IMR-90 (cell line): ENCODE measurements at regions of chr3 and their contacts with region 1.

Region 1: GRCh38 chr3:65559643-65560042 is 479.1 kb downstream of the MAGI1 start:
- DNase-seq: no peak
- ATAC-seq: no peak
- H3K4me3 ChIP-seq: no peak overlapping the region
- H3K27ac ChIP-seq: no peak overlapping the region
- H3K4me1 ChIP-seq: no peaks in the 10 kb centered on the region
- H3K27me3 ChIP-seq: no peaks in the 10 kb centered on the region
- CTCF ChIP-seq: no peak
- POLR2A ChIP-seq: no peak
- RAD21 ChIP-seq: no peak

Region 2: DNA sequence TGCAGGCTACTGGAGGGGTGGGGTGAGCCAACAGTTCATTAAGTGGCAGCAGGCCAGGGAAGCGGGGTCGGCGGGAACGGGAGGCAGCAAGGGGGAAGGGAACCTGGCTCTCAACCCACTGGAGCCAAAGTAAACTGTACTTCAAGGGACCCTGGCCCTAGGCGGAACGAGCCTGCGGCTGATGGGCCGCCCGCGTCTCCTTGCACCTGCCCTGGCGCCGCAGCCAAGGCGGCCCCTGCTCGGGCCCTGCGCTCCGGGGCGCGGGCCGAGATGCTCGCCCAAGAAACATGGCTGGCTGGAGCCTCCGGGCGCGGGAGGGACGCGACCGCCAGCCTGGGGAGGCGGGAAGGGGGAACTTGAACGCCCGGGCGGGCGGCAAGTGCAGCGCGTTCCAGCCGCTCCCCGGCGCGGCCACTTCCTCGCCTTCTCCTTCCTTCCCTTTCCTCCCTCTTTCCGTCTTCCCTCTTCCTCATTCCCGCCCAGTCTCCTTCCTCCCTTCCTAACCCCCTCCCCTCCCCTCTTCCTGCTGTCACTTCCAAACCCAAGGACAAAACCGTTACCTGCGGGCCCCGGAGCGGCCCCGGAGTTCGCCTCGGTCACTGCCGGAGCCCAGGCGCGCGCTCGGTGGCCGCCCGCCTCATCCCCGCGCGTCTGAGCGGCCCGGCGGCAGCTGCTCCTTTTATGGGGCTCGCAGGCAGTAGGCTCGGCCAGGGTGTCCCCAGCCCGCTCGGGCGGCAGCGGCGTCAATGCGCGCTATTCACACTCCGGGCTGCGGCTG is 10.6 kb before region 1 on chr3:
- CTCF ChIA-PET with region 1: no interaction called
- POLR2A ChIA-PET with region 1: interaction called, 10 read pairs
- dilution Hi-C with region 1: no loop called
- in situ Hi-C with region 1: no loop called
- intact Hi-C with region 1: no loop called
- DNase-seq: no peak
- ATAC-seq: peak; percentile 83
- H3K4me3 ChIP-seq: peak overlapping the region; percentile 63
- H3K27ac ChIP-seq: no peak overlapping the region; the same call in 1 of the 2 replicates
- H3K4me1 ChIP-seq: peaks cover 9% of the 10 kb centered on the region
- H3K27me3 ChIP-seq: no peaks in the 10 kb centered on the region
- CTCF ChIP-seq: no peak
- POLR2A ChIP-seq: no peak
- RAD21 ChIP-seq: no peak

Region 3: DNA sequence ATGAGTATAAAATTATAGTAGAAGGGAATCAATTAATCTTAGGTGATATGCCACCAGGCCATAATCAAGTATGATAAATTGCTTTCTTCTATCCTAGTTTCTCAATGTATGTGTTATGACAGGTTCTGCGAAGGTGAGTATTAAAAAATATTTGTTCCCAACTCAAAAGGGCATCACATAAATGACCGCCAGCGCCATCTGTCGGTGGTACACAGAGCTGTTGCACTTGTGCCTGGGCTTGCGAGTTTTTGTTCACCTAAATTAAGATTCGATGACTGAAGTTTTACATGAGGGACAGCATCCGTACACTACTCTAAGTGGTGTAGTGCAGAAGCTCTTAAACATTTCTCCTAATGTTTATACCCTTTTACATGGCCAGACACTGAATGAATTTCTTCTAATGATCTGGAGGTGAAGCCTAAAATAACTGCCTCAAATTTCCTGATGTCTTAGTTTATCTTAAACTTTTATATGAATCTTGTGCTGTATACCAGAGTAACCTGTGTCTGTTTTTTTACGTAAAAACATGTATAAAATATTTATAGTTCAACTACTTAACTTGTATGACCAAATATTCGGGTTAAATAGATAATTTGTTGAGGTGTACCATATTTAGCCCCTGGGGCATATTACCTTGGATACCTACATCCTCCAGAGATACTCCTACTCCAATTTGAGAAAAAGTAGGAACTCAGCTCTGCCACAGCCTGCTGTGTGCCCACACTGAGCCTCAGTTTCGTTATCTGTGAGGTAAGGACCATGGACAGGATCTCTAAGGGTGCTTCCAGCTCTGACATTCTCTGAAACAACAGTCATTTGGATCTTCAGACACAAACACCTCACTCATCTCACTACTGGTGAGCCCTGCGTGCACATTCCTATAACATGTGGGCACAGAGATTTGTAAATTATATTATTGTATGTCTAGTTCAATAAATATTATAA is 113.5 kb after region 1 on chr3:
- CTCF ChIA-PET with region 1: no interaction called
- POLR2A ChIA-PET with region 1: no interaction called
- dilution Hi-C with region 1: no loop called
- in situ Hi-C with region 1: no loop called
- intact Hi-C with region 1: no loop called
- DNase-seq: peak; percentile 57
- ATAC-seq: peak; percentile 68
- H3K4me3 ChIP-seq: no peak overlapping the region
- H3K27ac ChIP-seq: no peak overlapping the region
- H3K4me1 ChIP-seq: no peaks in the 10 kb centered on the region
- H3K27me3 ChIP-seq: no peaks in the 10 kb centered on the region
- CTCF ChIP-seq: peak; percentile 66
- POLR2A ChIP-seq: no peak
- RAD21 ChIP-seq: peak; percentile 69